ENCODE measurements at regions of chr10 and their contacts with region 1.

Region 1: DNA sequence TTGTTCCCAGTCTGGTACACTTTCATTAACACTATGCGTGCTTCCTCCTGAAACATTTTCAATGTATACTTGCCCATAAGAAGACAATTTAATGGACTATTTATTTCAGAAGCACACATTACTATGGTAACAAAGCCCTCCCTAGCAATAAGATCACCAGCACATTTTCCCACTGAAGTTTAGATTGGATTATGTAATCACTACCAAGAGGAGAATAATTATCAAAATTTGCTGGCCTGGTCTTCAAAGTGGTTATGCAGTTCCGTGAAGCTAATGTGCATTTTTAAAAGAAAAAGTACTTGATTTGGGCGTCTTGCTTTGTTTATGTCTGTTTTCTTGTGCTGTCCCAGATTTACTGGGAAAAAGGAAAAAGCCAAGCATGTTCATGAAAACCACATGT is 61.9 kb downstream of the AP3M1 start:
- DNase-seq: no peak
- ATAC-seq: no peak
- H3K4me3 Mint-ChIP-seq: no peak overlapping the region
- H3K27ac Mint-ChIP-seq: no peak overlapping the region
- H3K4me1 Mint-ChIP-seq: peaks cover 15% of the 10 kb centered on the region
- H3K27me3 Mint-ChIP-seq: no peaks in the 10 kb centered on the region

Region 2: GRCh38 chr10:74103560-74104248 is 15.0 kb after region 1 on chr10:
- CTCF ChIA-PET with region 1: interaction called, 11 read pairs
- DNase-seq: no peak
- ATAC-seq: peak; percentile 42
- H3K4me3 Mint-ChIP-seq: no peak overlapping the region
- H3K27ac Mint-ChIP-seq: no peak overlapping the region
- H3K4me1 Mint-ChIP-seq: peaks cover 3% of the 10 kb centered on the region
- H3K27me3 Mint-ChIP-seq: no peaks in the 10 kb centered on the region